ENCODE measurements at regions of chr5 and their contacts with region 1.

Region 1: DNA sequence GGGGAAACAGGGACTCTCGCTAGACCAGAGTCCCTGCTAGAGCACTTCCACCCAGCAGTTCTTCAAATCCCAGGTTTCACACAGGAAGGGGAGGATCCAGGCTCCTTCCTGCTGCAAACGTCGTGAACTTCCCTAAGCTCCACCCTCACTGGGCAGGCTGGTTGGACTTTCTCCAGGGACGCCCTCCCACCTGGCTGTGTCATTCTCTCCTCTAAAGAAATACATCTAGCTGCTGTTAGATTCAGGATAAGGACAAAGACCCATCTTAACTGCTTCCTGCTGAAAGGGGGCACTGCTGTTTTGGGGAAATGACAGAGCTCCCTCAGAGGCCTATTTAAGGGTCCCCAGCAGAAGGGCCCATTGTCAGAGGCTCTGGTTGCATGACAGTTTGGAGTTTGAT is 230.7 kb downstream of the SEMA6A start:
- DNase-seq: peak; percentile 36
- H3K4me3 ChIP-seq: no peak overlapping the region
- H3K27ac ChIP-seq: peak overlapping the region; percentile 27
- H3K4me1 ChIP-seq: peaks cover 13% of the 10 kb centered on the region
- H3K27me3 ChIP-seq: no peaks in the 10 kb centered on the region
- CTCF ChIP-seq: no peak

Region 2: GRCh38 chr5:116299752-116300640 is 44.0 kb before region 1 on chr5:
- intact Hi-C with region 1: loop called (anchors 2 kb)
- DNase-seq: no peak
- H3K4me3 ChIP-seq: no peak overlapping the region
- H3K27ac ChIP-seq: no peak overlapping the region
- H3K4me1 ChIP-seq: no peaks in the 10 kb centered on the region
- H3K27me3 ChIP-seq: no peaks in the 10 kb centered on the region
- CTCF ChIP-seq: no peak

Measured in left ventricle myocardium inferior (tissue), 1 donor.